ENCODE measurements at regions of chr1 and their contacts with region 1.

Region 1: DNA sequence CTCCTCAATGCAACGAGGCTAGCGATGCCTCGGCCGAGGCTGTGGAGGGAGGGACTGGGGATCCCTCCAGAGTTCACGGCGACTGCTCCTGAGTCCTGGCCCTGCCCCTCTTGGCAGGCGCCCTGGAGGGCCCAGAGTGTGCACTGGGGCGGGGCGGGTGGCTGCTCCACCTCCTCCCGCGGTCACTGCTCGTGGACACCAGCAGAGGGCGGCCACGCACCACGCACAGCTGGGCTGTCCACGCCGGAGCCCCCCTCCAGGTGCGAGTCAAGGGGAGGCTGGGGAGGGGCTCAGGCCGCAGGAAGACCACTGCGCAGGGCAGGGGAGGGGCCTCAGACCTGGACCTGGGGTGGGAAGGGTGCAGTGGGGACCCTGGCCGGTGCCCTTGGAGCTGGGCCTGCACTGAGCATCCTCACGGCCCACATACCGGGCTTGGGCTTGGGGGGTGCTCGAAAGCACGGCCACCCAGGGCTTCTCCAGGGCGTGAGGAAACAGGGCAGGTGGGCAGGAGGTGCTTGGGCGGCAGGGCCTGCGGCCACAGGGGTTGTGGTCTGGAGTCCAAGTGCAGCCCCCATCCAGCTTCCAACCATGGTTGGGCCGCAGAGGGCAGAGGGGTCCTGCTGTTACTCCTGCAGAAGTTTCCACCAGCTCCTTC is 20.6 kb upstream of the TTC34 start:
- DNase-seq: peak in 4 of 5 donors; percentile 24 to 38 (median 31)
- H3K4me3 ChIP-seq: no peak overlapping the region
- H3K4me3 Mint-ChIP-seq: no peak overlapping the region
- H3K27ac ChIP-seq: no peak overlapping the region
- H3K27ac Mint-ChIP-seq: no peak overlapping the region
- H3K4me1 ChIP-seq: no peaks in the 10 kb centered on the region
- H3K4me1 Mint-ChIP-seq: no peaks in the 10 kb centered on the region
- H3K27me3 ChIP-seq: no peaks in the 10 kb centered on the region
- H3K27me3 Mint-ChIP-seq: peaks cover 1 to 11% of the 10 kb centered on the region in 2 donors

Region 2: DNA sequence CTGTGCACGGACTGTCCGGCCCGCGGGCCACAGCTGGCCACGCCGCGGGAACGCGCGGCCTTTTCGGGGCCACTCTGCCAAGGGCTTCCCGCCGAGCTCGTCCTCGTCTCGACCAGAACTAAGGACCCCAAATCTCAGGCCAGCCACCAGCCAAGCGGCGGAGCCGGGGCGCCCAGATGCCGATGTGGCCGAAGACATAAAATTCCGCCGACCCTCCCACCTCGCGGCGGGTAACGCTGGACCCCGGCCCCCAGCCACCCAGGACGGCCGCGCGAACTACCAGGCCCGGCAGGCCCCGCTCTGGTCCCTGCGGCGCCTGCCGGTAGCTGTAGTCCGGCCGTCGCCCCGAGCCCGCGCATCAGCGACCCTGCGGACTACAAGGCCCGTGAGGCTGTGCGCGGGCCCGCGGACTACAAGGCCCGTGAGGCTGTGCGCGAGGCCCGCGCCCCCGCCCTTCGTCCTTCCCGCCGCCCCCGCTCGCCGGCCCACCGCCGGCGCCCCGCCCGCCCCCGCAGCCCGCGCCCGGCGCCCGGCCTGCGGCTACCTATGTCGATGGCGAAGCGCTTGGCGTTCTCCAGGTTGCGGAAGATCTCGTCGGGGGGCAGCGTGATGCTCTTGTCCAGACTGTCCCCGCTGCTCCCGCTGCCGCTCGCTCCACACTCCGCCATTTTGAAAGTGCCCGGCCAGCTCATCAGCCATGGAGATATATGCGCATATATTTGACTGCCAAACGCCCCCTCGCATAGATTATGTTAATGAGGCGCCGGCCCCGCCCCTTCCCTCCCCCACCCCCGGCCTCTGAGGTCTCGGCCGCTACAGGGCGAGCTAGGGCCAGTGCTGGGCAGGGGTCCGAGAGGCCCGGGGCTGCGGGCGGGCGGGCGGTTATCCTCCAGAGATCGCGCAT is 295.9 kb before region 1 on chr1 and contains the start of gene PANK4:
- CTCF ChIA-PET with region 1: no interaction called
- POLR2A ChIA-PET with region 1: no interaction called
- intact Hi-C with region 1: no loop called
- DNase-seq: peak; percentile 86 to 90 (median 89)
- H3K4me3 ChIP-seq: peak within 1 kb of the TSS; percentile 31 to 96
- H3K4me3 Mint-ChIP-seq: peak within 1 kb of the TSS; percentile 89 to 97 (median 95)
- H3K27ac ChIP-seq: peak within 1 kb of the TSS; percentile 86
- H3K27ac Mint-ChIP-seq: peak within 1 kb of the TSS; percentile 86 to 98 (median 97)
- H3K4me1 ChIP-seq: peaks cover 64% of the 10 kb centered on the region
- H3K4me1 Mint-ChIP-seq: peaks cover 27 to 63% (median 47%) of the 10 kb centered on the region in 4 donors
- H3K27me3 ChIP-seq: peaks cover 9% of the 10 kb centered on the region
- H3K27me3 Mint-ChIP-seq: peaks cover 5 to 11% of the 10 kb centered on the region in 2 donors
- total RNA-seq, gene PANK4: 88.9 to 93.7 TPM

Region 3: GRCh38 chr1:2855206-2856065 is 33.3 kb after region 1 on chr1:
- CTCF ChIA-PET with region 1: no interaction called
- POLR2A ChIA-PET with region 1: no interaction called
- intact Hi-C with region 1: no loop called
- DNase-seq: no peak
- H3K4me3 ChIP-seq: no peak overlapping the region
- H3K4me3 Mint-ChIP-seq: no peak overlapping the region
- H3K27ac ChIP-seq: no peak overlapping the region
- H3K27ac Mint-ChIP-seq: no peak overlapping the region
- H3K4me1 ChIP-seq: no peaks in the 10 kb centered on the region
- H3K4me1 Mint-ChIP-seq: peaks cover 0 to 8% (median 0%) of the 10 kb centered on the region in 4 donors
- H3K27me3 ChIP-seq: no peaks in the 10 kb centered on the region
- H3K27me3 Mint-ChIP-seq: peaks cover 0 to 11% of the 10 kb centered on the region in 2 donors

Region 4: DNA sequence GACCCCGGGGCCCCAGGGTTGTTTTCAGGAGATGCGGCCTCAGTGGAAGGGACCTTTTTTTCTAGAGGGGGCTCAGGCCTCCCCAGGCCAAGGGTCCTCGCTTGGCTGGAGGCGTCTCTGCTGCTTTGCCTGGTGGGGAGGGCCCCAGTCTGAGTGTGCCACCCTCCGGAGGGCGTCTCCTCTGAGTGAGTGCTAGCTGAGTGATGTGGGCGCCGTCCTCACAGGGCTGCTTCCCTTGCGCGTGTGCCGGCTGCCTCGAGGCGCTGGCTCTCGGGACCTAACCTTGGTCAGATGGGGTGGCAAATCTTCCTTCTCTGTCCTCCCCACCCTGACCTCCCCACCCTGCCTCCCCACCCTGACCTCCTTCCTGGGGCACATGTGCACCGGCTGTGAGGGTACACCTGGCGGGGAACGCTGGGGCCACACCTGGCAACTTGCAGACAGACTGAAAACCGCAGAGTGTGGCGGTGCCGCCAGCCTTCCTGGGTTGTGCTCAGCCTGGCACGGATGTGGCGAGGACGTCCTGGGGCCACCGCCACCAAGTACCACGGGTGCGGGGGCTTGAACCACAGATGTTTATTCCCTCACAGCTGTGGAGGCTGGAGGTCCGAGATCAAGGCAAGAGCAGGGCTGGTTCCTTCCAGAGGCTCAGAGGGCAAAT is 72.4 kb after region 1 on chr1:
- CTCF ChIA-PET with region 1: no interaction called
- POLR2A ChIA-PET with region 1: no interaction called
- intact Hi-C with region 1: no loop called
- DNase-seq: peak; percentile 35 to 58 (median 39)
- H3K4me3 ChIP-seq: no peak overlapping the region
- H3K4me3 Mint-ChIP-seq: no peak overlapping the region
- H3K27ac ChIP-seq: no peak overlapping the region
- H3K27ac Mint-ChIP-seq: peak overlapping the region in 1 of 7 donors; percentile 53
- H3K4me1 ChIP-seq: peaks cover 22% of the 10 kb centered on the region
- H3K4me1 Mint-ChIP-seq: peaks cover 6 to 19% (median 11%) of the 10 kb centered on the region in 4 donors
- H3K27me3 ChIP-seq: no peaks in the 10 kb centered on the region
- H3K27me3 Mint-ChIP-seq: peaks cover 0 to 2% of the 10 kb centered on the region in 2 donors

Region 5: GRCh38 chr1:3423245-3423829 is 601.2 kb after region 1 on chr1:
- CTCF ChIA-PET with region 1: no interaction called
- POLR2A ChIA-PET with region 1: no interaction called
- intact Hi-C with region 1: loop called (anchors 5 kb)
- DNase-seq: no peak
- H3K4me3 ChIP-seq: no peak overlapping the region
- H3K4me3 Mint-ChIP-seq: no peak overlapping the region
- H3K27ac ChIP-seq: no peak overlapping the region
- H3K27ac Mint-ChIP-seq: no peak overlapping the region
- H3K4me1 ChIP-seq: no peaks in the 10 kb centered on the region
- H3K4me1 Mint-ChIP-seq: peaks cover 0 to 5% (median 0%) of the 10 kb centered on the region in 4 donors
- H3K27me3 ChIP-seq: no peaks in the 10 kb centered on the region
- H3K27me3 Mint-ChIP-seq: peaks cover 6 to 8% of the 10 kb centered on the region in 2 donors

Measured in CD4-positive, alpha-beta memory T cell (primary cell).